ENCODE measurements at regions of chr7 and their contacts with region 1.

Region 1: DNA sequence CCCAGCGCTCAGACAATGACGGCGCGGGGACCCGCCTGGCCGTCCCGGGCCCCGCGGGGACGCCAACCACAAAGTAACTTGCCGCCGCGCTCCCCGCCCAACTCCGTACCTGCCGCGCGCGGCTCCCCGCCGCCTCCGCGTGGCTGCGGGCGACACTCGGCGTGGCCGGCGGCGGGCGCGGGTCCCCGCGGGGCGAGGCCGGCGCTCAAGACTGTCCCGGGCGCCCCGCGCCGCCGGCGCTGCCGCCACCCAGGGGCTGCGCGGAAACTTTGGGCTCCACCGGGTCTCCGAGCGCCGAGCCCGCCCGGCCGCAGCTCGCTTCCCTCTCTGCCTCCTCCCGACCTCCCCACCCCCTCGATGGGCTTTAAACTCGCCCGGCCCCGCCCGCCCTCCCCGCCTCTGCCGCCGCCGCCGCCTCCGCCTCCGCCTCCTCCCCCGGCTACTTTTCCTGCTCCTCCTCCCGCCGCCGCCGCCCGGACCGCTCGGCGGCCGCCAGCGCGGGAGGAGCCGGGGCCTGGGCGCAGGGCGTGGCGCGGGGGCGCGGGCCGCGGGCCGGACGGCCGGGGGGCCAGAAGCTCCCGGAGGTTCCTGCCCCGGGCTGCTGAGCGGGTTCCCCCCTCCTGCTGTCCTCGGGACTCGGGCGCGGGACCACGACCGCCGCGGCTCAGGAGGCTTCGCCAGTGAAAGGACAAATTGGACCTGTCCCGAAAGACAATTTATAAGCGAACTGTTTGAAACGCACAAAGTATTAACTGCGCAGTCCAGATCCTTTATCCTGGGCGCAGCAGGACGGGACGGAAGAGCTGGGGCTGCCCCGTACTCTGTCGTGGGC is 10.6 kb upstream of the GRB10 start:
- DNase-seq: peak; percentile 75 to 81
- H3K4me3 ChIP-seq: peak overlapping the region; percentile 47
- H3K4me3 Mint-ChIP-seq: peak overlapping the region; percentile 88
- H3K27ac Mint-ChIP-seq: no peak overlapping the region
- H3K4me1 ChIP-seq: peaks cover 5% of the 10 kb centered on the region; the same call in 1 of the 2 replicates
- H3K4me1 Mint-ChIP-seq: no peaks in the 10 kb centered on the region
- H3K27me3 ChIP-seq: no peaks in the 10 kb centered on the region
- H3K27me3 Mint-ChIP-seq: no peaks in the 10 kb centered on the region
- CTCF ChIP-seq: no peak

Region 2: DNA sequence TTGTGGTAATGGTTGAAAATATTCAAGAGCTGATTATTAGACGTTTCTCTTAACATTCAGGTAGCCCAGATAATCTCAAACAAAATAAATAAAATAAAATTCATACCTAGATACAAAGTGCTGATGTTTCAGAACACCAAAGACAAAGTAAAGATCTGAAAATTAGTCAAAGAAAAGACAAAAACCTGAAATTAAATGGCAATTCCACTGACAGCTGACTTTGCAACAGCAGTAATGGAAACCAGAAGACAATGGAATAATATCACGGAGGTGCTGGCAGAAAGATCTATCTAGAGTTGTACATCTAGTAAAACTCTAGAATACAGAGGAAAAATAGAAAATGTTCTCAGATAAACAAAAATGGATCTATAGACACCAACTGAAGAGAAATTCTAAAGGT is 546.8 kb before region 1 on chr7:
- CTCF ChIA-PET with region 1: no interaction called
- POLR2A ChIA-PET with region 1: no interaction called
- intact Hi-C with region 1: no loop called
- DNase-seq: no peak
- H3K4me3 ChIP-seq: no peak overlapping the region
- H3K4me3 Mint-ChIP-seq: no peak overlapping the region
- H3K27ac Mint-ChIP-seq: no peak overlapping the region
- H3K4me1 ChIP-seq: no peaks in the 10 kb centered on the region
- H3K4me1 Mint-ChIP-seq: no peaks in the 10 kb centered on the region
- H3K27me3 ChIP-seq: no peaks in the 10 kb centered on the region
- H3K27me3 Mint-ChIP-seq: no peaks in the 10 kb centered on the region
- CTCF ChIP-seq: no peak

Region 3: GRCh38 chr7:50696810-50697582 is 96.3 kb before region 1 on chr7:
- CTCF ChIA-PET with region 1: no interaction called
- POLR2A ChIA-PET with region 1: no interaction called
- intact Hi-C with region 1: loop called (anchors 2 kb)
- DNase-seq: peak in 1 of 2 experiments; percentile 31
- H3K4me3 ChIP-seq: no peak overlapping the region
- H3K4me3 Mint-ChIP-seq: no peak overlapping the region
- H3K27ac Mint-ChIP-seq: peak overlapping the region; percentile 8
- H3K4me1 ChIP-seq: no peaks in the 10 kb centered on the region
- H3K4me1 Mint-ChIP-seq: peaks cover 7% of the 10 kb centered on the region
- H3K27me3 ChIP-seq: no peaks in the 10 kb centered on the region
- H3K27me3 Mint-ChIP-seq: no peaks in the 10 kb centered on the region
- CTCF ChIP-seq: peak; percentile 49 to 59

Region 4: GRCh38 chr7:50733555-50733954 is 59.8 kb before region 1 on chr7:
- CTCF ChIA-PET with region 1: no interaction called
- POLR2A ChIA-PET with region 1: no interaction called
- intact Hi-C with region 1: loop called (anchors 5 kb)
- DNase-seq: peak; percentile 73 to 82
- H3K4me3 ChIP-seq: no peak overlapping the region
- H3K4me3 Mint-ChIP-seq: no peak overlapping the region
- H3K27ac Mint-ChIP-seq: peak overlapping the region; percentile 92
- H3K4me1 ChIP-seq: peaks cover 24% of the 10 kb centered on the region
- H3K4me1 Mint-ChIP-seq: peaks cover 39% of the 10 kb centered on the region
- H3K27me3 ChIP-seq: no peaks in the 10 kb centered on the region
- H3K27me3 Mint-ChIP-seq: no peaks in the 10 kb centered on the region
- CTCF ChIP-seq: no peak

Region 5: DNA sequence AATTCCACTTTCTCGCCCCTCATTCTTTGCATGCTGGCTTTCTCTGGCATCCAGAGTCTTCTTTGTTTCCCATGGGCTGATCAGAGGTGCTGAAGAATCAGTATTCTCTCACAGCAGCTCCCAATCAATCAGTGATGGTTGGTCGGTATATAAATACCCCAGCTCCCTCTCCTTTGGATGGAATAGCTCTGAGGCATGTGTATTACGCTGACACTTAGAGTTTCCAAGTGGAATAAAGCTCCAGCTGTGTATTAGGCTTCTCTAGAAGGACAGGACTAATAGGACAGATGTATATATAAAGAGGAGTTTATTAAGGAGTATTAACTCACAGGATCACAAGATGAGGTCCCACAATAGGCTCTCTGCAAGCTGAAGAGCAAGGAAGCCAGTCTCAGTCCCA is 207.6 kb after region 1 on chr7:
- CTCF ChIA-PET with region 1: no interaction called
- POLR2A ChIA-PET with region 1: no interaction called
- intact Hi-C with region 1: loop called (anchors 5 kb)
- DNase-seq: no peak
- H3K4me3 ChIP-seq: no peak overlapping the region
- H3K4me3 Mint-ChIP-seq: no peak overlapping the region
- H3K27ac Mint-ChIP-seq: no peak overlapping the region
- H3K4me1 ChIP-seq: no peaks in the 10 kb centered on the region
- H3K4me1 Mint-ChIP-seq: no peaks in the 10 kb centered on the region
- H3K27me3 ChIP-seq: no peaks in the 10 kb centered on the region
- H3K27me3 Mint-ChIP-seq: no peaks in the 10 kb centered on the region
- CTCF ChIP-seq: no peak

Region 6: GRCh38 chr7:51593628-51594027 is 800.3 kb after region 1 on chr7:
- CTCF ChIA-PET with region 1: no interaction called
- POLR2A ChIA-PET with region 1: no interaction called
- intact Hi-C with region 1: no loop called
- DNase-seq: no peak
- H3K4me3 ChIP-seq: no peak overlapping the region
- H3K4me3 Mint-ChIP-seq: no peak overlapping the region
- H3K27ac Mint-ChIP-seq: no peak overlapping the region
- H3K4me1 ChIP-seq: 0 out of 2 replicates have a peak, but pooled peaks cover 6% of the 10 kb centered on the region
- H3K4me1 Mint-ChIP-seq: peaks cover 12% of the 10 kb centered on the region
- H3K27me3 ChIP-seq: no peaks in the 10 kb centered on the region
- H3K27me3 Mint-ChIP-seq: no peaks in the 10 kb centered on the region
- CTCF ChIP-seq: no peak

Measured in Caco-2 (cell line).